WTC11 (cell line): ENCODE measurements at regions of chr14 and their contacts with region 1.

Region 1: GRCh38 chr14:49497725-49498348 is 88.3 kb downstream of the RPS29 start:
- DNase-seq: no peak
- ATAC-seq: peak; percentile 63
- H3K4me3 Mint-ChIP-seq: no peak overlapping the region
- H3K27ac Mint-ChIP-seq: no peak overlapping the region
- H3K4me1 Mint-ChIP-seq: peaks cover 17% of the 10 kb centered on the region
- H3K27me3 Mint-ChIP-seq: no peaks in the 10 kb centered on the region; the same call in none of the 2 replicates
- CTCF ChIP-seq: peak; percentile 84

Region 2: GRCh38 chr14:49485290-49485689 is 12.5 kb before region 1 on chr14:
- CTCF ChIA-PET with region 1: interaction called, 15 read pairs
- POLR2A ChIA-PET with region 1: no interaction called
- DNase-seq: no peak
- ATAC-seq: no peak
- H3K4me3 Mint-ChIP-seq: no peak overlapping the region
- H3K27ac Mint-ChIP-seq: no peak overlapping the region
- H3K4me1 Mint-ChIP-seq: peaks cover 7% of the 10 kb centered on the region
- H3K27me3 Mint-ChIP-seq: no peaks in the 10 kb centered on the region
- CTCF ChIP-seq: no peak

Region 3: GRCh38 chr14:49550286-49551184 is 52.7 kb after region 1 on chr14:
- CTCF ChIA-PET with region 1: interaction called, 35 read pairs
- POLR2A ChIA-PET with region 1: no interaction called
- DNase-seq: no peak
- ATAC-seq: peak; percentile 24; the same call in 1 of the 2 replicates
- H3K4me3 Mint-ChIP-seq: peak overlapping the region; percentile 33; the same call in 1 of the 2 replicates
- H3K27ac Mint-ChIP-seq: no peak overlapping the region
- H3K4me1 Mint-ChIP-seq: peaks cover 41% of the 10 kb centered on the region
- H3K27me3 Mint-ChIP-seq: no peaks in the 10 kb centered on the region; the same call in 1 of the 2 replicates
- CTCF ChIP-seq: no peak